Dendritic cell treated with granulocyte-macrophage colony-stimulating factor and Interleukin-4, amounts not matched to agents 40 ng/mL and 50 ng/mL, for 4 days (primary cell): ENCODE measurements at regions of chr1 and their contacts with region 1.

Region 1: DNA sequence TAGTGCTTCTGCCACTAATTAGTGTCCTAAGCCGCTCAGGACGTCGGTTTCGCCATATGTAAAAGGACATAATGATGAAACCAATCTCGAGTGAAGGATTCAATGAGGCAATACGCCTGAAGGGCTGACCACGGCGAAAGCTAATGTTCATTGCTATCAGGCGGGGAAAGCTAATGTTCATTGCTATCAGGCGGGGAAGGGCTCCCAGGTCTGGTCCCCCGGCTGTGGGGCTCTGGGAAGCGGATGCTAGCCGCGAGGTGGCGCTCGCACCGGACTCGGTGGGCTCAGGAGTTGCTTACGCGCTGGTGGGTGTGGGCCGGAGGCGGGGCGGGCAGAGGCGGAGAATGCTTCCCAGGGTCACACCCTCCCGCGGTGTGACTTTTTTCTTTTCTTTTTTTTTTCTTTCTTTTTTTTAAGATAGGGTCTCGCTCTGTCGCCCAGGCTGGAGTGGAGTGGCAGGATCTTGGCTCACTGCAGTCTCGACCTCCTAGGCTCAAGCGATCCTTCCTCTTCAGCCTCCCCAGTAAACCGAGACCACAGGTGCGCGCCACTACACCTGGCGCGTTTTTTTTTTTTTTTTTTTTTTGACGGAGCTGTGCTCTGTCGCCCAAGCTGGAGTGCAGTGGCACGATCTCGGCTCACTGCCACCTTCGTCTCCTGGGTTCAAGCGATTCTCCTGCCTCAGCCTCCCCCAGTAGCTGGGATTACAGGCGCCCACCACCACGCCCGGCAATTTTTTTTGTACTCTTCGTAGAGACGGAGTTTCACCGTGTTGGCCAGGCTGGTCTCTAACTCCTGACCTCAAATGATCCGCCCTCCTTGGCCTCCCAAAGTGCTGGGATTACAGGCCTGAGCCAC is 1.1 kb upstream of the PEAR1 start:
- H3K4me3 Mint-ChIP-seq: peak overlapping the region; percentile 60
- H3K27ac Mint-ChIP-seq: no peak overlapping the region
- H3K4me1 Mint-ChIP-seq: peaks cover 10% of the 10 kb centered on the region
- H3K27me3 Mint-ChIP-seq: peaks cover 79% of the 10 kb centered on the region

Region 2: DNA sequence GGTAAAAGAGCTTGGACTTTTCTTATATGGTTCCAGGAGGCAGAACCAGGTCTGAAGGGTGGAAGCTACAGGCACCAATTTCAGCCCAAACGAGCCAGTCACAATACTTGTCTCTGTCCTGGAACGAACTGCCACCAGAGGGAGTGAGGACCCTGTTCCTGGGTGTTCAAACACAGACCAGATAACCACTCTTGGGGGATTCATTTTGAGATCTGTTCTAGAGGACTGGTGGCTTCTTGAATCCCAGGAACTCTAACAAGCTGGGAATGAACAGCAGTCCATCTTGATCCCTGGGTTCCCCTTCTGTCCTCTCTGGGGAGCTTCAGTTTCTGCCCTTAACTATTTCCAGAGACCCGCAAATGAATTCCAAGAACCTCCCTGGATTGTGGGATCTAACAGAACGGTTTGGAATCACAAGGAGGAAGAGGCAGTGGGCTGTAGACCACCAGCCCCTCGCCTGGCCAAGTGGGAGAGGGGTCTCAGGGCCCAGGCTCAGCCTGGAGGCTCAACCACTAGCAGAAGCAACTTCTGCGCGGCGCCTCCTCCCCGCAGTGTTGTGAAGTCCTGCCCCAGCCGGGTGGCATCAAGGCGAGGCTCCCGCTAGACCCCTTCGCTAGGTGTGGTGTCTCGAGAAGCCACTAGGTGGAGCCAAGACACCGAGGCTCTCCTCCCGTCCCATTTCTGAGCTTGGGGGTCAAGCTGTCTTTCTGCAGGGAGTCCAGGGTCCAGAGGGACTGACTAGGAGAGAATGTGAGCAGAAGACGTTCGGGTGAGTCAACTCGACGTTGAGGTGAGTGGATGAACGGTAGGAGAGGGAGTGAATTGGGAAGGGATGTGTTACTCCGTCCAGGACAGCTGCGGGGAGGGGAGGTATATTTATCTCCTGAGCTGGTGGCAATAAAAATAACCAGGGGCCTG is 203.1 kb before region 1 on chr1:
- intact Hi-C with region 1: loop called (anchors 1 kb)
- H3K4me3 Mint-ChIP-seq: no peak overlapping the region
- H3K27ac Mint-ChIP-seq: no peak overlapping the region
- H3K4me1 Mint-ChIP-seq: peaks cover 41% of the 10 kb centered on the region
- H3K27me3 Mint-ChIP-seq: peaks cover 82% of the 10 kb centered on the region

Region 3: GRCh38 chr1:156751758-156752757 is 140.4 kb before region 1 on chr1:
- intact Hi-C with region 1: no loop called
- H3K4me3 Mint-ChIP-seq: peak overlapping the region; percentile 91
- H3K27ac Mint-ChIP-seq: peak overlapping the region; percentile 92
- H3K4me1 Mint-ChIP-seq: peaks cover 46% of the 10 kb centered on the region
- H3K27me3 Mint-ChIP-seq: no peaks in the 10 kb centered on the region

Region 4: GRCh38 chr1:156797212-156797871 is 95.1 kb before region 1 on chr1:
- intact Hi-C with region 1: loop called (anchors 1 kb)
- H3K4me3 Mint-ChIP-seq: no peak overlapping the region
- H3K27ac Mint-ChIP-seq: no peak overlapping the region
- H3K4me1 Mint-ChIP-seq: peaks cover 14% of the 10 kb centered on the region
- H3K27me3 Mint-ChIP-seq: no peaks in the 10 kb centered on the region

Region 5: DNA sequence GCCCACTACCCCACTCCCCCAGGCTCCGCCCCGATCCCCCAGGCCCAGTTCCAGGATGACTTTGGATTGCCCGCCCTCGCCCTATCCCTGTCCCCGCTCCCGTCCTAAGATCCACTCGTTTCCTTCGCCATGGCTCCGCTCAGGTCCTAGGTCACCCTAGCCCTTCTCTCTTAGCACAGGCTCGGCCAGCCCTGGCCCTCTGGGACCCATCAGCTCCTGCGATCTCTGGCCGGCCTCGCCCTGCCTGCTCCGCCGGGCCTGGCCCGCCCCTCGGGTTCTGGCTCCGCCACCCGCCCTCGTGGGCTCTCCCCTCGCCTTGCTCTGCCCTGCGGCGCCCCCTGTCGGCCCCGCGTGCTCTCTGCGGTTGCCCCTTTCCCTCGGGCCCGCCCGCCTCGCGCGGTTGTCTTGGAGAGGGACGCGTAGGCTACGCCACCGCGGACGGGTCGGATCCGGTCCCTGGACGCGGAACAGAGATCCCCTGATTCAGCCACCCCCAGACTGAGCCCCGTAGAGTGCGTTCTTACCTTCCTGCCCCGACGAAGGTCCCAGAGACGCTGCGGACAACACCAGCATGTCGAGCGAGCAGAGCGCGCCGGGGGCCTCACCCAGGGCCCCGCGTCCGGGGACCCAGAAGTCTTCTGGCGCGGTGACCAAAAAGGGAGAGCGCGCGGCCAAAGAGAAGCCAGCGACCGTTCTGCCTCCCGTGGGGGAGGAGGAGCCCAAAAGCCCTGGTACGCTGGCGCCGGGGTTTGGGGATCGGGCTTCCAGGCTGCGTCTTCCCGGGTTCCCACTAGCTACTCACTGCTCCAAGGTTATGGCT is 28.0 kb after region 1 on chr1 and contains the start of gene LRRC71:
- intact Hi-C with region 1: loop called (anchors 1 kb)
- H3K4me3 Mint-ChIP-seq: peak within 1 kb of the TSS; percentile 30
- H3K27ac Mint-ChIP-seq: no peak within 1 kb of the TSS
- H3K4me1 Mint-ChIP-seq: peaks cover 22% of the 10 kb centered on the region
- H3K27me3 Mint-ChIP-seq: peaks cover 75% of the 10 kb centered on the region

Region 6: GRCh38 chr1:157580179-157580827 is 687.9 kb after region 1 on chr1:
- intact Hi-C with region 1: no loop called
- H3K4me3 Mint-ChIP-seq: no peak overlapping the region
- H3K27ac Mint-ChIP-seq: no peak overlapping the region
- H3K4me1 Mint-ChIP-seq: no peaks in the 10 kb centered on the region
- H3K27me3 Mint-ChIP-seq: peaks cover 73% of the 10 kb centered on the region